ENCODE measurements at regions of chr9 and their contacts with region 1.

Region 1: GRCh38 chr9:128552153-128552743 is at the start of gene SPTAN1:
- DNase-seq: peak; percentile 94
- ATAC-seq: peak; percentile 91
- total RNA-seq, gene SPTAN1: 203 TPM

Region 2: DNA sequence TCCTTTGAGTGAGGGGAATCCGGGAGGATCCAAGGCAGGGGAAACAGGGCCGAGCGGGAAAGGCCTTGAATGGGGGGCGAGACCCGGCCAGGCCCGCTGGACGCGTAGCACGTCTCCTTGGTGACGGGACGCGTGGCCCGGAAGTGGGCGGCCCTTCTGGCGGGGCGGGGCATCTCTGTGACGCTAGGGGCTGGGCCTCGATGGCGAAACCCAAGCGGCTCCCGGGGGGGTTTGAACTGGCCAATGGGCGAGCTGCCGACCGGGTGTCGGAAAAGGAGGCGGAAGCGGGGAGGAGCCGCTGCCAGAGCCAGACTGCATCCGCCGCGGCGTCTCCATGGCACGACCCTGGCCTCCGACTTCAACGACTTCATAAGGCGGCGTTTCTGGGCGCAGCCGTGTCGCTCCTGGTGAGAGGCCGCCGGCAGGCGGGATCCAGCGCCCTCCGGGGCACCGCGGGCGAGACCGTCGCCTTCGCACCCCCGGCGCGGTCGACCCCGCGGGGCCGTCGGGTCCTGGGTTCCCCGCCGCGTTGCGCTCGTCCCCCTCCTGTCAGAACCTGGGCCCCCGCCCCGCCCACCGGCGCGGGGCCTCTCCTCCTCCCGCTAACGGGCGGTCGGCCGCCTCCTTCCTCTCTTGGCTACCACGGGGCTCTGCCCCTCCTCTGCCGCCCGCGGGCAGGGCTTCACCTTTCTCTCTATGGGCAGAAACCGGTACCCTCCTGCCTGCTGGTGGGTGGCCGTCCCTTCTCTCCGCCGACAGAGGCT is 96.2 kb before region 1 on chr9 and contains the start of gene ODF2:
- intact Hi-C with region 1: loop called (anchors 5 kb)
- DNase-seq: peak; percentile 99
- ATAC-seq: peak; percentile 96
- total RNA-seq, gene ODF2: 12.0 TPM